Spleen (tissue), 13 donors: ENCODE measurements at regions of chr16 and their contacts with region 1.

Region 1: GRCh38 chr16:8880839-8881510 is 1.2 kb upstream of the LITAFD start:
- DNase-seq: peak; percentile 19
- H3K4me3 ChIP-seq: no peak overlapping the region
- H3K27ac ChIP-seq: no peak overlapping the region
- H3K4me1 ChIP-seq: peaks cover 0 to 23% (median 11%) of the 10 kb centered on the region in 6 donors
- H3K27me3 ChIP-seq: peaks cover 0 to 39% (median 0%) of the 10 kb centered on the region in 7 donors
- CTCF ChIP-seq: no peak
- POLR2A ChIP-seq: no peak

Region 2: GRCh38 chr16:8660841-8661301 is 220.1 kb before region 1 on chr16:
- intact Hi-C with region 1: loop called (anchors 5 kb)
- DNase-seq: peak; percentile 87
- H3K4me3 ChIP-seq: no peak overlapping the region
- H3K27ac ChIP-seq: no peak overlapping the region
- H3K4me1 ChIP-seq: no peaks in the 10 kb centered on the region
- H3K27me3 ChIP-seq: no peaks in the 10 kb centered on the region
- CTCF ChIP-seq: peak; percentile 39 to 75 (median 66)
- POLR2A ChIP-seq: no peak